Panc1 (cell line): ENCODE measurements at regions of chr2 and their contacts with region 1.

Region 1: GRCh38 chr2:142572346-142573132 is 304.9 kb upstream of the KYNU start:
- DNase-seq: no peak
- ATAC-seq: no peak
- H3K4me3 ChIP-seq: no peak overlapping the region
- H3K27ac ChIP-seq: no peak overlapping the region
- H3K4me1 ChIP-seq: no peaks in the 10 kb centered on the region
- H3K27me3 ChIP-seq: no peaks in the 10 kb centered on the region
- CTCF ChIP-seq: no peak

Region 2: DNA sequence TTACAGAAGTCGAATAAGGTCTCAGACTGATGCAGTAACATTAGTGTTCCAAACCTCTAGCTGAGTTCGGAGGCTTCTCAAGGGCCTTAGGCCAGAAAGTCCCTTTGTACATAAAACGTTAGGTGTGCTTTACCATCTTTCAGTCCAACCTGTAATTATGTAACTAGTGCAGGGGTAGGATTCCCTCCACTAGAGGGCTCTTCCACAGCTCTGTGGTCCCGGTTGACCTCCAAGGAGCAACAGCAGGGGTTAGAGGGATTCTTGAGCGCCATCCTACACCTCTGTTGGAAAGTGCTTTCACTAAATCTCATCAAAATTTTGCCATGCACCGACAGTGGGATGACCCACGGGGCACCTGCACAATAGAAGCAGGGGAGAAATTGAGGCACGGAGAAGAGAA is 285.9 kb before region 1 on chr2:
- CTCF ChIA-PET with region 1: no interaction called
- POLR2A ChIA-PET with region 1: interaction called, 16 read pairs
- in situ Hi-C with region 1: no loop called
- intact Hi-C with region 1: no loop called
- DNase-seq: no peak
- ATAC-seq: no peak
- H3K4me3 ChIP-seq: no peak overlapping the region
- H3K27ac ChIP-seq: no peak overlapping the region
- H3K4me1 ChIP-seq: no peaks in the 10 kb centered on the region
- H3K27me3 ChIP-seq: no peaks in the 10 kb centered on the region
- CTCF ChIP-seq: peak; percentile 50

Region 3: DNA sequence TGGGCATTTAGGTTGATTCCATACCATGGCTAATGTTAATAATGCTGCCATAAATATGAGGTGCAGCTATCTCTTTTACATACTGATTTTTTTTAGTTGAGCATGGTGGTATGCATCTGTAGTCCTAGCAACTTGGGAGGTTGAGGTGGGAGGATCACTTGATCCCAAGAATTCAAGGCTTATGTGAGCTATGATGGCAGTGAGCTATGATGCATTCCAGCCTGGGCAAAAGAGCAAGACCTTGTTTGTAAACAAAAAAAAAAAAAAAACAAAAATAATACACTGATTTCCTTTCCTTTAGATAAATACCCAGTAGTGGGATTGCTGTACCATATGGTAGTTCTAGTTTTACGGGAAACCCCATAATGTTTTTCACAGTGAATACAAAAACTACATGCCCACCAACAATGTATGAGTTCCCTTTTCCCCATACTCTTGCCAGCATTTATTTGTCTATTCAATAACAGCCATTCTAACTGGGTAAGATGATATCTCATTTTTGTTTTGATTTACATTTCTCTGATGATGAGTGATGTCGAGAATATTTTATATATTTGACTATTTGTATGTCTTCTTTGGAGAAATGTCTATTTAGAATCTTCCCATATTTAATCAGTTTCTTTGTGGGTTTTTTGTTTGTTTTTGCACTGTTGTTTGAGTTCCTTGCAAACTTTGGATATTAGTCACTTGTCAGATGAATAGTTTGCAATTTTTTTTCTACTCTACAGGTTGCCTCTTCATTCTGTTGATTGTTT is 24.0 kb after region 1 on chr2:
- CTCF ChIA-PET with region 1: no interaction called
- POLR2A ChIA-PET with region 1: no interaction called
- in situ Hi-C with region 1: no loop called
- intact Hi-C with region 1: no loop called
- DNase-seq: peak; percentile 36
- ATAC-seq: peak; percentile 86
- H3K4me3 ChIP-seq: no peak overlapping the region
- H3K27ac ChIP-seq: no peak overlapping the region
- H3K4me1 ChIP-seq: no peaks in the 10 kb centered on the region
- H3K27me3 ChIP-seq: no peaks in the 10 kb centered on the region
- CTCF ChIP-seq: no peak

Region 4: GRCh38 chr2:143847257-143847656 is 1274.7 kb after region 1 on chr2:
- CTCF ChIA-PET with region 1: no interaction called
- POLR2A ChIA-PET with region 1: interaction called, 14 read pairs
- in situ Hi-C with region 1: no loop called
- intact Hi-C with region 1: no loop called
- DNase-seq: no peak
- ATAC-seq: no peak
- H3K4me3 ChIP-seq: no peak overlapping the region
- H3K27ac ChIP-seq: no peak overlapping the region
- H3K4me1 ChIP-seq: no peaks in the 10 kb centered on the region
- H3K27me3 ChIP-seq: no peaks in the 10 kb centered on the region
- CTCF ChIP-seq: no peak